ENCODE measurements at regions of chr11 and their contacts with region 1.

Region 1: GRCh38 chr11:63779039-63779438 is 10.5 kb upstream of the ZFTA start:
- DNase-seq: no peak
- CTCF ChIP-seq: no peak

Region 2: DNA sequence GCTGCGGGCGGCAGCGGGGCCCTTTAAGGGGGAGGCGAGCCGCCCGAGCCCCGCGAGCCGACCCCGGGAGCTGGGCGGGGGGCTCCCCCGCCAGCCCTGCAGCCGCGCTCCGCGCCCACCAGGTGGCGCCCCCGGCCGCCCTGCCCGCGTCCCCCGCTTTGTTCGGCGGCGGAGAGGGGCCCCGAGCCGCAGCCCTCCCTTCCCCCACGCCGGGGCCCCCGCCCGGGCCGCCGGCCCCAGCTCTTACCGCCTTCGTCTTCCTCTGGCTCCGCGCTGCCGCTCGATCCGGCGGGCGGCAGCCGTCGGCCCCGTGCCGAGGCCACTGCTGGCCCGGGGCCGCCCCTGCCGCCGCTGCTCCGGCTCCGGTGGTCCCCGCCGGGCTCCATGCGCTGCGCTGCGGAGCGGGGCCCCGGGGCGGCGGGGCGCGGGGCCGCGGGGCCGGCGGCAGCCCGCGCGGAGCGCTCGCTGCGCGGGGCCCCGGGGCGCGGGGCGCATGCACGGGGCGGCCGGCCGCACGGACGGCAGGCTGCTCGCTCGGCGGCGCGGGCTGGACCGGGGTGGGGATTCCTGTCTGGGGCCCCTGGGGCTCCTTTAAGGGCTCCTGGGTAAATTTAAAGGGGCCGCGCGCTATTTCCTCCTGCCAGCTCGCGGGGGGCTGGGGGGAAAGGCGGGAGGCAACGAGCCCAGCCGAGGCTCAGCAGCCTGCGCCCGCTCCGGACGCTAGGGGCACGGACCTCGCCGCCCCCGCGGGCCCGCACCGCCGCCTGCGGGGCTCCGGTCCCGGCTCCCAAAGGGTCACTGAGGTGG is 10.6 kb before region 1 on chr11 and contains the start of gene ZFTA:
- CTCF ChIA-PET with region 1: interaction called, 15 read pairs
- POLR2A ChIA-PET with region 1: no interaction called
- DNase-seq: peak; percentile 89
- CTCF ChIP-seq: peak; percentile 80

Measured in GM10248 (cell line).